Activated T-helper 2 cell treated with anti-CD3 and anti-CD28 coated beads, Interferon-gamma antibody, Interleukin-2, Interleukin-4, amounts not matched to agents 10 μg/mL and 5 μg/mL and 100 μg/mL, durations not matched to agents 14 hours and 24 hours and 36 hours (primary cell): ENCODE measurements at regions of chr9 and their contacts with region 1.

Region 1: GRCh38 chr9:126516936-126517832 is 96.5 kb upstream of the LMX1B start:
- DNase-seq: peak; percentile 68
- H3K4me3 Mint-ChIP-seq: peak overlapping the region; percentile 59
- H3K27ac Mint-ChIP-seq: peak overlapping the region; percentile 74
- H3K4me1 Mint-ChIP-seq: peaks cover 26% of the 10 kb centered on the region
- H3K27me3 Mint-ChIP-seq: peaks cover 65% of the 10 kb centered on the region

Region 2: GRCh38 chr9:125521462-125522327 is 995.5 kb before region 1 on chr9:
- intact Hi-C with region 1: loop called (anchors 5 kb)
- DNase-seq: peak; percentile 24
- H3K4me3 Mint-ChIP-seq: peak overlapping the region; percentile 51
- H3K27ac Mint-ChIP-seq: peak overlapping the region; percentile 91
- H3K4me1 Mint-ChIP-seq: peaks cover 50% of the 10 kb centered on the region
- H3K27me3 Mint-ChIP-seq: no peaks in the 10 kb centered on the region

Region 3: GRCh38 chr9:126108240-126108639 is 408.9 kb before region 1 on chr9:
- intact Hi-C with region 1: no loop called
- DNase-seq: no peak
- H3K4me3 Mint-ChIP-seq: no peak overlapping the region
- H3K27ac Mint-ChIP-seq: no peak overlapping the region
- H3K4me1 Mint-ChIP-seq: no peaks in the 10 kb centered on the region
- H3K27me3 Mint-ChIP-seq: peaks cover 5% of the 10 kb centered on the region

Region 4: GRCh38 chr9:126411225-126411947 is 105.8 kb before region 1 on chr9:
- intact Hi-C with region 1: loop called (anchors 1 kb)
- DNase-seq: peak; percentile 46
- H3K4me3 Mint-ChIP-seq: peak overlapping the region; percentile 35
- H3K27ac Mint-ChIP-seq: peak overlapping the region; percentile 58
- H3K4me1 Mint-ChIP-seq: peaks cover 32% of the 10 kb centered on the region
- H3K27me3 Mint-ChIP-seq: peaks cover 13% of the 10 kb centered on the region

Region 5: GRCh38 chr9:126471084-126471624 is 46.0 kb before region 1 on chr9:
- intact Hi-C with region 1: loop called (anchors 1 kb)
- DNase-seq: peak; percentile 81
- H3K4me3 Mint-ChIP-seq: peak overlapping the region; percentile 41
- H3K27ac Mint-ChIP-seq: peak overlapping the region; percentile 51
- H3K4me1 Mint-ChIP-seq: peaks cover 44% of the 10 kb centered on the region
- H3K27me3 Mint-ChIP-seq: peaks cover 63% of the 10 kb centered on the region

Region 6: DNA sequence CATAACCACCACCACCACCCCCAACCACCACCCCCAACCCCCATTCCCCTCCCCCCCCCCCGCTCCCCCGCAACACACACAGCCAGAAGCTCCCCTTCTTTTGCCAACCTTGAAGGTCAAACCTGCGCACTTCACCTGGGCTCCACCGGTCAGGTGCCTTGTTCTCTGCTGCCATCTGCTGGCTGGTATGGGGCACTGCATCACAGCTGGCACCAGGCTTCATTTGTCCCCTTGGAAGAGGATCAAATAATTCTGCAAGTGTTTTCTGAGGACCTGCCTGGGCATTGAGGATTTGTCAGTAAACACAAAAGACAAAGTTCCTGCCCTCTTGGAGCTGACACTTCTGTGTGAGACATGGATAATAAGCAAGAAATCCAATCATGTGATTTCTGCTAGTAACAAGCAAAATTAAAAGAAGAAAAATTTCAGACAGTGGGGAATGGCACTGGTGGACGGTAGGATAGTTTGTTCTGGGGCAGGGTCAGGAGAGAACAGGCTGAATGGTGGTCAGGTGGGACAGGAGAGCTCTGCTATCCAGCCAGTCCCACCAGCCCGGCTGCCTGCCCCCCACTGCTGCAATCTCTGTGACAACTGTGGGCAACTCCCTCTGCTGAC is 41.0 kb after region 1 on chr9:
- intact Hi-C with region 1: loop called (anchors 5 kb)
- DNase-seq: peak; percentile 38
- H3K4me3 Mint-ChIP-seq: no peak overlapping the region
- H3K27ac Mint-ChIP-seq: no peak overlapping the region
- H3K4me1 Mint-ChIP-seq: no peaks in the 10 kb centered on the region
- H3K27me3 Mint-ChIP-seq: peaks cover 29% of the 10 kb centered on the region